Activated T-helper 1 cell treated with anti-CD3 and anti-CD28 coated beads, Interleukin-12 subunit alpha, Interleukin-12 subunit beta, Interleukin-2, Interleukin-4 antibody, amounts not matched to agents 30 ng/mL and 10 ng/mL and 1 ng/mL, durations not matched to agents 14 hours and 24 hours and 36 hours (primary cell): ENCODE measurements at regions of chr16 and their contacts with region 1.

Region 1: GRCh38 chr16:20900299-20901067 is at the starts of genes DCUN1D3 and LYRM1:
- DNase-seq: peak; percentile 81
- H3K4me3 Mint-ChIP-seq: peak within 1 kb of the TSS; percentile 90
- H3K27ac Mint-ChIP-seq: peak within 1 kb of the TSS; percentile 100
- H3K4me1 Mint-ChIP-seq: peaks cover 76% of the 10 kb centered on the region
- H3K27me3 Mint-ChIP-seq: no peaks in the 10 kb centered on the region
- total RNA-seq, gene DCUN1D3: 14.5 and 16.7 TPM in 2 replicates
- total RNA-seq, gene LYRM1: 21.2 and 23.7 TPM in 2 replicates

Region 2: GRCh38 chr16:20741554-20742285 is 158.8 kb before region 1 on chr16 and contains the start of gene THUMPD1:
- intact Hi-C with region 1: loop called (anchors 1 kb)
- DNase-seq: peak; percentile 90
- H3K4me3 Mint-ChIP-seq: peak within 1 kb of the TSS; percentile 97
- H3K27ac Mint-ChIP-seq: peak within 1 kb of the TSS; percentile 95
- H3K4me1 Mint-ChIP-seq: peaks cover 11% of the 10 kb centered on the region
- H3K27me3 Mint-ChIP-seq: no peaks in the 10 kb centered on the region
- total RNA-seq, gene THUMPD1: 42.4 and 43.3 TPM in 2 replicates

Region 3: DNA sequence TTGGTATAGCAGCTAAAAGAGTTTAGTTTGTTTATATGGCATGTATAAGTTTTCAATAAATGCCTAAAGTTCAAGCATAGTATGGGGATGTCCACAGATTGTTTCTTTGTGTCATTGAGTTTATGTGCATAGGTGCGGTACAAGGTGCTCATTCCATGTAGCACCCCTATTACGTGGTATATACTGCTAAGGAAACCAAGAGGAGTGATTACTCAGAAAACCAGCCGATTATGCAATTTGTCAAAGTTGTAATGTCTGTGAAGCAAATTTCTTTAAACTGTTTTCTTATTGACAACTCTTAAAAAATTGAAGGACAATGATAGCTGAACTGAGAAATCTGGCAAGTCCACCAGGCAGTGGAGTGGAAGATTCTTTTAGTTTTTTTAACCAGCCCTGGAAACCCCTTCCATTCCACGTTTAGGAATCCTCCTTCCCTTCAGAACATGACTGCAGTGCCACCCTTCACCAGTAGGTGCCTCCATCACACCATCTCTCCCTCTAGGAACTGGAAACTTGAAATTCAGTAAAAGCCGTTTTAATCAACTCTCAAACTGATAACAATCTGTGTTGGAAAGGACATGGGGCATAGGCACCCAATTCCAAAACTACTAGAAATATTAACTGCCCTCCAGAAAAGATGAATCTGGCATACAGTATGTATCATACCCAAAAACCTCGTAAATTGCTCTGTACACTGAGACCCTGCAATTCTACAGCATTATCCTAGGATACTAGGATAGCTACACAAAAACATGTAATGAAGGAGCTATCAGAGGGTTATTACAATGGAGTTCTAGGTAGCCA is 50.7 kb before region 1 on chr16:
- intact Hi-C with region 1: loop called (anchors 1 kb)
- DNase-seq: peak; percentile 40
- H3K4me3 Mint-ChIP-seq: no peak overlapping the region
- H3K27ac Mint-ChIP-seq: no peak overlapping the region
- H3K4me1 Mint-ChIP-seq: peaks cover 31% of the 10 kb centered on the region
- H3K27me3 Mint-ChIP-seq: no peaks in the 10 kb centered on the region

Region 4: DNA sequence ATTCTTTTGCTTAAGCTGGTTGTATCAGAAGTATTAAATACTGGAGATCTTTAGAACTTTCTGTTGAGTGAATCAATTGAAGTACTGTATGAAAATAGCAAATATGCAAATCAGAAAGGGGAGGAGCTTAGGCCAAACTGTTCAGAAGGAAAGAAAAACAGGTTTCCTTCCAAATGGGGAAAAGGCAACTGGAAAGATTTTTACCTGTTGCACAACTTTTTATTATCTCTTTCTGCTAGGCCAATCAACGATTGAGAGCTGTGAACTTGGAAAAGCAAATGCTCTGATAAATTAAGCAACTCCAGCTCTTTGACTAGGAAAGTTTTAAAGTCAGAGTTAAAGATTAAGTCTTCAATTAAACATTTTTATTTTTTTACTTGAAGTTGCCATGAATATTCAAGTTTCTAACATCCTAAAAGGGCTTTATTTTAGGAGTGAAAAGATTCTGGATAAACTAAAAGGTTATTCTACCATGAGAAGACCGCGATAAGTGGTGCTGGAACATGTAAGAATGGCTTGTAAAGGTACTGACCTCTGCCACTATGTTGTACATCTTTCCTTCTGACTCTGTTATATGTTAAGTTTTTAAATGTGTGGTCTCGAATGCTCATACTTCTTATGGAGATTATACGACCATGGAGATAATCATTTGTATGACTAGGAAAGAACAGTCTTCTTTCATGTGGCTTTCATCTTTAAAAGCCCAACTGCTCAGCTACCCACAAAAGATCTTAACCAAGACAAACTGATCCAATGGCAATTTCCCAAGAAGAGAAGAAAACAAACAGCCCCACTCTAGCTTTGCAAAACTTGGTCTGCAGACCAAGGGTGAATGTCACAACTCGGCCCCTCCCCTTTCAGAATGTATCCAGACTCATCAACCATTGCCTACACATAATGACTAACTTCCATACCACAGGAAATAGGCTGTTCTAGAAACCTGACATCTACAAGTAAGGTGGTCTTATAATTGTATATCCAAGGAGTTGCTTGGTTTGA is 16.6 kb before region 1 on chr16:
- intact Hi-C with region 1: loop called (anchors 1 kb)
- DNase-seq: no peak
- H3K4me3 Mint-ChIP-seq: no peak overlapping the region
- H3K27ac Mint-ChIP-seq: peak overlapping the region; percentile 45
- H3K4me1 Mint-ChIP-seq: peaks cover 41% of the 10 kb centered on the region
- H3K27me3 Mint-ChIP-seq: no peaks in the 10 kb centered on the region

Region 5: GRCh38 chr16:20938426-20938825 is 37.9 kb after region 1 on chr16:
- intact Hi-C with region 1: loop called (anchors 1 kb)
- DNase-seq: no peak
- H3K4me3 Mint-ChIP-seq: no peak overlapping the region
- H3K27ac Mint-ChIP-seq: peak overlapping the region; percentile 78
- H3K4me1 Mint-ChIP-seq: peaks cover 37% of the 10 kb centered on the region
- H3K27me3 Mint-ChIP-seq: no peaks in the 10 kb centered on the region

Region 6: DNA sequence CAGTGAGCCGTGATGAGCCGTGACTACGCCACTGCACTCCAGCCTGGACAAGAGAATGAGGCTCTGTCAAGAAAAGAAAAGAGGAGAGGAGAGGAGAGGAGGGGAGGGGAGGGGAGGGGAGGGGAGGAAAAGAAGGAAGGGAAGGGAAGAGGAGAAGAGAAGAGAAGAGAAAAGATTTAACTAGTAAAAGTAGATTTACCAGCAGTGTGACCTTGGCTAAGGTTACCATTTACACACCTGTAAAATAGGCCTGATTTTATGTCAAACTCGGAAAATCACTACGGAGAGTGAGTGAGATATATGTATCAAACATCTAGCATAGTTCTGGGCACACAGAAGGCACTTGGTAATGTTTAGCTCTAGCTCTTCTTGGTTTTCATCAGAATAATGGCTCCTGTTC is 109.3 kb after region 1 on chr16:
- intact Hi-C with region 1: no loop called
- DNase-seq: no peak
- H3K4me3 Mint-ChIP-seq: no peak overlapping the region
- H3K27ac Mint-ChIP-seq: no peak overlapping the region
- H3K4me1 Mint-ChIP-seq: no peaks in the 10 kb centered on the region
- H3K27me3 Mint-ChIP-seq: peaks cover 31% of the 10 kb centered on the region